Heart left ventricle (tissue), 16 donors: ENCODE measurements at regions of chrX and their contacts with region 1.

Region 1: GRCh38 chrX:86806788-86807187 is 658.5 kb downstream of the DACH2 start:
- DNase-seq: no peak
- ATAC-seq: no peak
- H3K4me3 ChIP-seq: no peak overlapping the region
- H3K27ac ChIP-seq: no peak overlapping the region
- H3K4me1 ChIP-seq: no peaks in the 10 kb centered on the region
- H3K27me3 ChIP-seq: no peaks in the 10 kb centered on the region
- CTCF ChIP-seq: peak in 7 of 12 donors; percentile 8 to 30 (median 16)
- POLR2A ChIP-seq: no peak

Region 2: DNA sequence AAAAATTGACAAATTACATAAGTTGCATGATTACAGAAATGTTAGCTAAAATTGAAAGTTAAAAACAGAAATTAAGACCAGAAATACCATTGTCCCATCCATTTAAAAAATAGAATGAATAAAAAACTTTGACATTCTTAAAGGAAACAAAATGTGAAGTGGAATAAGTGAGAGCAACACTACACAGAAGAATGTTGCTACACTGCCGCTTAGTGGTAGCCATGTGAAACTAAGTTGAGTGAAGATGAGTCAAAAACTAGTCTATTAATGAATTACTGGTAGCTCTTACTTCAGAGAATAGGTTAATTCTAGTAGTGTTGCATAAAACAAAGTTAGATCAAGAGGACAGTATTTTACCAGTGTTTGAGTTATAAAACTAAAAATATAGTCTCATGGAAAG is 139.8 kb after region 1 on chrX:
- intact Hi-C with region 1: loop called in 2 of 10 experiments (anchors 10 kb)
- DNase-seq: no peak
- ATAC-seq: no peak
- H3K4me3 ChIP-seq: no peak overlapping the region
- H3K27ac ChIP-seq: no peak overlapping the region
- H3K4me1 ChIP-seq: no peaks in the 10 kb centered on the region
- H3K27me3 ChIP-seq: no peaks in the 10 kb centered on the region
- CTCF ChIP-seq: peak in 10 of 12 donors; percentile 17 to 44 (median 32)
- POLR2A ChIP-seq: no peak